ENCODE measurements at regions of chr17 and their contacts with region 1.

Region 1: DNA sequence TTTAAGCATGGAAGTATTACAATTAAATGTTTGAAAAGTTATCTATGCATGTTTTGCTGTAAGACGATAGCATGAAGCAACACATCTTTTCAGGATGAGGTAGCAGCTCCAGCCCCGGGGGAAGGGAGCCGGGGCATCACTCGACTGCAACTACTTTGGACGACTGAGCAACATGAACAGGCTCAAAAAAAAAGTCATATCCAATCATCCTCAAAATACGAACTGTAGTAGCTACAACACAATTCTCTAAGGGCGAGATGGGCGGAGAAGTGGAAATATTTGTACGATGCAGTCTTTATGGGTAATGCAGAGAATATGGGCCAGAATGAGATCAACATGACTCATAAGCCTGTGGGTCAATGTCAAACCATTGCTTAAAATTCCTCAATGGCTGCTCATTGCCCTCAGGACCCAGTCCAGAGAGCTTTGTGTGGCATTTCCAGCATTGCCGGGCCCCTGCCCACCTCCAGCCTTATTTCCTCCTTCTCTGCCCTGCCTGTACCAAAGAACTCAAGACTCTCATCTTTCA is 17.6 kb upstream of the SMURF2 start:
- DNase-seq: peak; percentile 91
- ATAC-seq: peak; percentile 71
- H3K4me3 ChIP-seq: peak overlapping the region; percentile 9 to 42
- H3K27ac ChIP-seq: peak overlapping the region; percentile 88
- H3K4me1 ChIP-seq: peaks cover 59 to 80% of the 10 kb centered on the region in 2 experiments
- H3K27me3 ChIP-seq: no peaks in the 10 kb centered on the region
- CTCF ChIP-seq: no peak
- POLR2A ChIP-seq: no peak
- RAD21 ChIP-seq: no peak; the same call in 1 of the 2 replicates

Region 2: DNA sequence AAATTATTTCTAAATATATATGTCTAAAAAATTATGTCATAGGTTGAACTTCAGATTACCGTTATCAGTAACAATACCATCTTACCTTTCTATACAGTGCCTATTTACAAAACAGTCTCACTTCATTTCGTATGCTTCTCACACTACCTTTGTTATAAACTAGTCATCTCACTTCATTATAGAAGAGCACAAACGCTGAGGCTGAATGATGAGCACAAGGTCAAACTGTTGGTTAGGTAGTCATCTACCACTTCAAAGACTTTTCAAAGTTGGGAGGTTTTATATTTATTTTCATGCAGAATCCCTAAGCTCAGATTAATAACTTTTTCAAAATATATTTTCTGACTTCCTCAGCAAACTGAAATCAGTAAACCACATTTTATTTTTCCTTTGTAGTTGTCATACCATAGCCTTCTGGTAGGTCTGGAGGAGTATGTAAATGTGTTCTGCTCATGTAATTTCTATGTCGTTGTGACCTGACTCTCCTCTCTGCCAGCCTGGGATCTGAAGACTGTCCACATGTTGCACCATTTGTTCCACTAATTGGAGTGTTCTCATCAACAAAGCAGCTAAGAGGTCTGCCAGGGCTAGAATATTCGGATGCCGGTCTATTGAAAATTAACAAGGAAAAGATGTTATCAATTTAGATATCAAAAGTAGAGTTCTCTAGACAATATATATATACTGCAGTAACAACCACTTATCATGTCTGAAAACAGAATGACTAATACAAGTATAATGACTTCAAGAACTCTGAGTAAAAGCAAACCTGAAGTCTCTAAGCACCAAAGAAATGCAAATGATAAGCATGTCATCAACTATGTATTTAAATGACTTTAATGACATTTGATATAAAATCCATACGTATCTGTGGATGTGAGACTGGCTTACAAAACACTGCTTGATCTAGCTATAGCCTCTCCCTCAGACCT is 99.1 kb before region 1 on chr17:
- CTCF ChIA-PET with region 1: no interaction called
- POLR2A ChIA-PET with region 1: no interaction called
- RAD21 ChIA-PET with region 1: no interaction called
- intact Hi-C with region 1: no loop called
- DNase-seq: no peak
- ATAC-seq: no peak; the same call in 1 of the 2 replicates
- H3K4me3 ChIP-seq: no peak overlapping the region
- H3K27ac ChIP-seq: no peak overlapping the region
- H3K4me1 ChIP-seq: no peaks in the 10 kb centered on the region
- H3K27me3 ChIP-seq: no peaks in the 10 kb centered on the region
- CTCF ChIP-seq: no peak
- POLR2A ChIP-seq: no peak
- RAD21 ChIP-seq: no peak

Region 3: GRCh38 chr17:64635647-64636307 is 44.0 kb before region 1 on chr17:
- CTCF ChIA-PET with region 1: no interaction called
- POLR2A ChIA-PET with region 1: no interaction called
- RAD21 ChIA-PET with region 1: no interaction called
- intact Hi-C with region 1: no loop called
- DNase-seq: no peak
- ATAC-seq: peak; percentile 58
- H3K4me3 ChIP-seq: no peak overlapping the region
- H3K27ac ChIP-seq: peak overlapping the region; percentile 9; the same call in 1 of the 2 replicates
- H3K4me1 ChIP-seq: peaks cover 11 to 58% of the 10 kb centered on the region in 2 experiments
- H3K27me3 ChIP-seq: no peaks in the 10 kb centered on the region
- CTCF ChIP-seq: no peak
- POLR2A ChIP-seq: no peak
- RAD21 ChIP-seq: no peak

Region 4: GRCh38 chr17:64692187-64692586 is 12.4 kb after region 1 on chr17:
- CTCF ChIA-PET with region 1: no interaction called
- POLR2A ChIA-PET with region 1: interaction called, 12 read pairs
- RAD21 ChIA-PET with region 1: interaction called in 1 of 2 experiments, 3 read pairs
- intact Hi-C with region 1: no loop called
- DNase-seq: no peak
- ATAC-seq: no peak
- H3K4me3 ChIP-seq: no peak overlapping the region
- H3K27ac ChIP-seq: no peak overlapping the region
- H3K4me1 ChIP-seq: peaks cover 71 to 88% of the 10 kb centered on the region in 2 experiments
- H3K27me3 ChIP-seq: no peaks in the 10 kb centered on the region
- CTCF ChIP-seq: no peak
- POLR2A ChIP-seq: no peak
- RAD21 ChIP-seq: no peak

Region 5: GRCh38 chr17:64698725-64699124 is 19.0 kb after region 1 on chr17:
- CTCF ChIA-PET with region 1: no interaction called
- POLR2A ChIA-PET with region 1: interaction called, 37 read pairs
- RAD21 ChIA-PET with region 1: interaction called in 1 of 2 experiments, 3 read pairs
- intact Hi-C with region 1: no loop called
- DNase-seq: no peak
- ATAC-seq: no peak
- H3K4me3 ChIP-seq: no peak overlapping the region
- H3K27ac ChIP-seq: no peak overlapping the region
- H3K4me1 ChIP-seq: peaks cover 76 to 91% of the 10 kb centered on the region in 2 experiments
- H3K27me3 ChIP-seq: no peaks in the 10 kb centered on the region
- CTCF ChIP-seq: no peak
- POLR2A ChIP-seq: no peak
- RAD21 ChIP-seq: no peak

Measured in HCT116 (cell line).